IMR-90 (cell line): ENCODE measurements at regions of chr5 and their contacts with region 1.

Region 1: DNA sequence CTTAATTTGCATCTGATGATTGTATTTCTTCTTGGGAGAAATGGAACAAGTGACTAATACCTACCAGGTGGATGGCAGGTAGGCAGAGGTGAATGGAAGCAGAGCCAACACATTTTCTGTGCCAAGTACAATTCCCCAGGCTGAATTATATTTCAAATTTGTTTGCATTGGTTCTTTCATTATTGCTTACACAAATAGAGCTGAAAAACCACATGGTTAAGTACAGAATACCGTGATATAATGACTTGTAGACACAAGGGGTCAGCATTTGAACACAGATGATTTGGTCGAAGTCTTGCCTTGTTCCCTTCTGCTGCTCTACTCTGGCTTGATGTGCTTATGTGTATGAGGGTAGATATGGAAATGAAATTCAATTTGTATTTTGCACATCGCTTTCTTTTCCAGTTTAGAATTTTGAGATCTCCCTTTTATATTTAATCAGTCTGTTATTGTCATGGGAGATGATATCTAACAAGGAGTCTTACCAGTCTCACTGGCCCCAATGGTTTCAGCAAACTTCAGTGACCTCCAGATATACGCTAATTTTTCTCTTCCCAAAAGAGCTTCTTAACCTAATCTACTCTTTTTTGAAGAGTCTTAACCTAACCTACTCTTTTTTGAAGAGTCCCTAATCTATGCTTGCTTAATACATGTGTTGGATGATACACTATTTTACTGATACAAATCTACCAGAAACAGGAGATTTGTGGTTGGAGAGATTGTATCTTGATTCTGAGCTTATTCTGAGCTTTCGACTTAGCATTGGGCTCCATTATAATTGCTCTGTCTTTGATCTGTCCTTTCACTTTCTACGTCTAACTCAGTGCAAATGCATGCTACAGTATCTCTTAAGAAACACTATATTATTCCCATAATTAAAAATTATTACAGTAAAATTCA is 88.1 kb downstream of the PCSK1 start:
- DNase-seq: peak; percentile 86
- ATAC-seq: peak; percentile 94
- H3K4me3 ChIP-seq: no peak overlapping the region
- H3K27ac ChIP-seq: no peak overlapping the region
- H3K4me1 ChIP-seq: 0 out of 2 replicates have a peak, but pooled peaks cover 2% of the 10 kb centered on the region
- H3K27me3 ChIP-seq: no peaks in the 10 kb centered on the region
- CTCF ChIP-seq: peak; percentile 78
- POLR2A ChIP-seq: no peak
- RAD21 ChIP-seq: peak; percentile 93

Region 2: GRCh38 chr5:95600557-95600956 is 744.4 kb before region 1 on chr5:
- CTCF ChIA-PET with region 1: no interaction called
- POLR2A ChIA-PET with region 1: no interaction called
- dilution Hi-C with region 1: no loop called
- in situ Hi-C with region 1: no loop called
- intact Hi-C with region 1: no loop called
- DNase-seq: peak; percentile 82
- ATAC-seq: peak; percentile 81
- H3K4me3 ChIP-seq: no peak overlapping the region
- H3K27ac ChIP-seq: no peak overlapping the region
- H3K4me1 ChIP-seq: peaks cover 3% of the 10 kb centered on the region; the same call in 1 of the 2 replicates
- H3K27me3 ChIP-seq: no peaks in the 10 kb centered on the region
- CTCF ChIP-seq: no peak
- POLR2A ChIP-seq: no peak
- RAD21 ChIP-seq: no peak

Region 3: GRCh38 chr5:95781101-95781583 is 563.8 kb before region 1 on chr5:
- CTCF ChIA-PET with region 1: no interaction called
- POLR2A ChIA-PET with region 1: no interaction called
- dilution Hi-C with region 1: no loop called
- in situ Hi-C with region 1: no loop called
- intact Hi-C with region 1: loop called (anchors 5 kb)
- DNase-seq: peak; percentile 85
- ATAC-seq: peak; percentile 75
- H3K4me3 ChIP-seq: no peak overlapping the region
- H3K27ac ChIP-seq: no peak overlapping the region; the same call in 1 of the 2 replicates
- H3K4me1 ChIP-seq: peaks cover 22% of the 10 kb centered on the region
- H3K27me3 ChIP-seq: no peaks in the 10 kb centered on the region
- CTCF ChIP-seq: peak; percentile 82
- POLR2A ChIP-seq: no peak; the same call in 1 of the 2 replicates
- RAD21 ChIP-seq: peak; percentile 83

Region 4: GRCh38 chr5:96601811-96602244 is 256.9 kb after region 1 on chr5:
- CTCF ChIA-PET with region 1: interaction called, 16 read pairs
- POLR2A ChIA-PET with region 1: no interaction called
- dilution Hi-C with region 1: no loop called
- in situ Hi-C with region 1: loop called (anchors 5 kb)
- intact Hi-C with region 1: loop called (anchors 1 kb)
- DNase-seq: peak; percentile 75
- ATAC-seq: peak; percentile 86
- H3K4me3 ChIP-seq: no peak overlapping the region
- H3K27ac ChIP-seq: no peak overlapping the region
- H3K4me1 ChIP-seq: no peaks in the 10 kb centered on the region
- H3K27me3 ChIP-seq: no peaks in the 10 kb centered on the region
- CTCF ChIP-seq: peak; percentile 80
- POLR2A ChIP-seq: no peak
- RAD21 ChIP-seq: peak; percentile 82

Region 5: GRCh38 chr5:96687812-96688453 is 343.0 kb after region 1 on chr5:
- CTCF ChIA-PET with region 1: no interaction called
- POLR2A ChIA-PET with region 1: no interaction called
- dilution Hi-C with region 1: no loop called
- in situ Hi-C with region 1: no loop called
- intact Hi-C with region 1: loop called (anchors 10 kb)
- DNase-seq: peak; percentile 76
- ATAC-seq: peak; percentile 79
- H3K4me3 ChIP-seq: no peak overlapping the region
- H3K27ac ChIP-seq: no peak overlapping the region
- H3K4me1 ChIP-seq: peaks cover 7% of the 10 kb centered on the region
- H3K27me3 ChIP-seq: no peaks in the 10 kb centered on the region
- CTCF ChIP-seq: peak; percentile 78
- POLR2A ChIP-seq: no peak
- RAD21 ChIP-seq: peak; percentile 85

Region 6: DNA sequence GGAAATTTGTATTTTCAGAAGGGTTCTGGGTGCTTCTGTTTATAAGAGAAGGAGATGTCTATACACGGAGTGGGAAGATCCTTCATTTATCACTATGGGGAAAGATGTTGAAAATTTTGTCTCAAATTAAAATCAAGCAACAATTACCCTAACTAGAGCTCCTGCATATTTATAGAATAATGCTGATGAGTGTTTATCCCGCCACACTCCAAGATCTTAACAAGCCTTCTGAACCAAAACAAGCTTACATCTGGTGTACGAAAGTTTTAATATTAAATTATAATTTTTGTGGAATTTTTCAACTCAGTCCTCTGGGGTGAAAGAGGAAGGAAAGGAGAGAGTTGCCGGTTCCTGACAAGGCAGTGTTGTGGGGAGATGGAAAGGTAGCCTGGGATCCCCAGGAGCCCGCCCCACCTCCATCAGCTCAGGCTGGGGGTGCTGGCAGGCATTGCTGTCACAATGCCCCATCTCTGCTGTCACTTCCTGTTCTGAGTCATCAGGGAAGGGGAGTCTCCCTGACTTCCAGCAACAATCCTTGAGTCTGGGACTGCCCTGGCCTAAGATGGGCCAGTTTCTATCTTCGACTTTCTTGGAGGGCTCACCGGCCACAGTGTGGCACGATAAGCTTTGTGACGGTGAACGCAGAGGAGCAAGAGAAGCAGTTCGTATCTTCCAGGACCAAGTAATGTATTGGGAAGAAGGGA is 398.3 kb after region 1 on chr5:
- CTCF ChIA-PET with region 1: no interaction called
- POLR2A ChIA-PET with region 1: no interaction called
- dilution Hi-C with region 1: no loop called
- in situ Hi-C with region 1: loop called (anchors 10 kb)
- intact Hi-C with region 1: no loop called
- DNase-seq: peak; percentile 61
- ATAC-seq: peak; percentile 61
- H3K4me3 ChIP-seq: no peak overlapping the region
- H3K27ac ChIP-seq: 0 out of 2 replicates have a peak overlapping the region, but pooled peaks have one; percentile 17
- H3K4me1 ChIP-seq: peaks cover 6% of the 10 kb centered on the region
- H3K27me3 ChIP-seq: no peaks in the 10 kb centered on the region
- CTCF ChIP-seq: no peak
- POLR2A ChIP-seq: no peak
- RAD21 ChIP-seq: no peak